ENCODE measurements at regions of chr11 and their contacts with region 1.

Region 1: DNA sequence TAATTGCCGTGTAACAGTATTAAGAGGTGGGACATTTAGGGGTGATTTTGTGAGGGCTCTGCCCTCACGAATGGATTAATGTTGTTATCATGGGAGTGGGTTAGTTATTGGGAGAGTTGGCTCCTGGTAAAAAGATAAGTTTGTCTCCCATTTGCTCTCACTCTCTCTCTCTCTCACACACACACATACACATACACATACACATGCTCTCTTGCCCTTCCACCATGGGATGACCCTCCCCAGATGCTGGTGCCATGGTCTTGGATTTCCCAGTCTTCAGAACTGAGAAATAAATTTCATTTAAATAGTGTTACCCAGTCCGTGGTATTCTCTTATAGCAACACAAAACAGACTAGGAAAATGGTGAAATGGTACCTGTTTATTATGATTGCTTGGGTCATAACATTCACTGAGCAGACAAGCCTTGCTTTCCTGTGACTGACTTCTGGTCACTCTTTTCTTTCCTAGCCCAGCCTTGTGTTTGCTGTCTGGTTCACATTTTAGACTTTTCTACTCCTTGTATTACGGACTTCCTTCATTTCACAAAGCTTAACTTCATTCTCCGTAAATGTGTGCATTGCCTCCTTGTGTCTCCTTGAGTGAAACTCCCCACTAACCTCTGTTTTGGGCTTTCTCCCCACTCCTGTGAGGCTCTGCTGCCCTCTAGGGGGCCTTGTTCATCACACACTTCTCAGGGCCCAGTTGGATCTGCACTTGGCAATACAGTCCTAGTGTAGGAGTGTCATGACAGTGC is 206.5 kb upstream of the CTSC start:
- DNase-seq: peak; percentile 85
- H3K4me3 Mint-ChIP-seq: no peak overlapping the region
- H3K27ac Mint-ChIP-seq: no peak overlapping the region
- H3K4me1 Mint-ChIP-seq: peaks cover 11% of the 10 kb centered on the region
- H3K27me3 Mint-ChIP-seq: no peaks in the 10 kb centered on the region

Region 2: GRCh38 chr11:87352759-87353707 is 1191.0 kb before region 1 on chr11:
- CTCF ChIA-PET with region 1: interaction called, 4 read pairs
- POLR2A ChIA-PET with region 1: no interaction called
- intact Hi-C with region 1: loop called (anchors 1 kb)
- DNase-seq: peak; percentile 90
- H3K4me3 Mint-ChIP-seq: no peak overlapping the region
- H3K27ac Mint-ChIP-seq: no peak overlapping the region
- H3K4me1 Mint-ChIP-seq: peaks cover 8% of the 10 kb centered on the region
- H3K27me3 Mint-ChIP-seq: peaks cover 5% of the 10 kb centered on the region

Region 3: DNA sequence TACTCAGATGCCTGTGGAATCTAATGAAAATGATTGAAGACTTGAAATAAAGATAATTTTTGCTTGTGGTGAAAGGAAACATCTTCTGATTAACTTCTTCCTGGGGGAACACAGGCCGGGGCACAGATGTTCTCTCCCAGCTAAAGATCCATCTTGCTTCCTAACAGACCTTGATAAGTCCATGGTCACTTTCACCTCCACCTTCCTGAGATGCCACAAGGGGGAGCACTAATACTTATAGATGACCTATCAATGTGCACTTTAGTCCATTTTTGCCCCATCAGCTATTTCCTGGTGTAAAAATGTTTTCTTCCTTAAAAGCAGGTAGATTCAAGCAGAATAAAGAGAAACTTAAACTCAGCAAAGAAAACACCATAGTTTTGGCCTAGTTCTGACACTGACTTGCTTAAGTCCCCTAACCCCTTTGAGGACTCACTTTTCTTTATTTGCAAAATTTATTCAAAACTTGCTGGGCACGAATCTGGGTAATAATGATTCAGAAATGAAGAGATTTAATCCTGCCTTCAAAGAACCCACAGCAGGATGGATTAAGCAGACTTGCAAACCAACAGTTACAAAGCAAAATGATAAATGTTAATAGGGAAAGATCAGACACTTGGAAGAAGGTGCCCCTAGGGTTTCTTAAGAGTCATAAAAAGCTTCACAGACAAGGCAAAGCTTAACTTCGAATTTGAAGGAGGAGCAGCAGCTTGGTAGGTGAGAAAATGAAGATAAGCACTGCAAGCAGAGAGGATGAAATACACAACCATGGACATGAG is 527.5 kb before region 1 on chr11:
- CTCF ChIA-PET with region 1: interaction called, 50 read pairs
- POLR2A ChIA-PET with region 1: no interaction called
- intact Hi-C with region 1: loop called (anchors 1 kb)
- DNase-seq: peak; percentile 64
- H3K4me3 Mint-ChIP-seq: no peak overlapping the region
- H3K27ac Mint-ChIP-seq: no peak overlapping the region
- H3K4me1 Mint-ChIP-seq: no peaks in the 10 kb centered on the region
- H3K27me3 Mint-ChIP-seq: no peaks in the 10 kb centered on the region

Region 4: DNA sequence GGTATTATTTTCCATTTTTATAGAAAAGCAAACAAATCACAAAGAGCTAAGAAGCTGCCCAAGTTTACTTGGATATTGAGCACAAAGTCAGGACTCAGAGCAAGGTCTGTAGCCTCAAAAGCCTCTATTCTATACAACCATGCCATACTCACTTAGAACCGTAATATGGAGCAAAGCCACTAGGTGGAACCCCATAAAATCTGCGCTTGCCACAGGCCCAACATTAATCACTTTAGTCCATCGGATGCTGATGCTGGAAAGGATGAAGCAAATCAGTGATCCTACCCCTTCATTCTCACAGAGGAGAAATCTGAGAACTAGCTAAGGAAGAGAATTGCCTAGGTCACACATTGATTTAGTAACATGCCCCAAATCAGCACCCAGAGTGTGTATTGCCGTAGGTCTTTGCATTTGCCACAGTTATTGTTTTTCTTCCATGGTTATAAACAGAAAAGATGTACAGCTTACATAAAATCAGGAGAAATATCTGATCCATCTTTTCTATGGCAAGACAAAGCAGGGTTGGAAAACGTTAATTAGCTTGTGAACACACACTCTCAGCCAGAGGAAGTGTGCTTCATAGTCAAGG is 312.1 kb before region 1 on chr11:
- CTCF ChIA-PET with region 1: interaction called, 12 read pairs
- POLR2A ChIA-PET with region 1: no interaction called
- intact Hi-C with region 1: loop called (anchors 1 kb)
- DNase-seq: peak; percentile 13
- H3K4me3 Mint-ChIP-seq: no peak overlapping the region
- H3K27ac Mint-ChIP-seq: no peak overlapping the region
- H3K4me1 Mint-ChIP-seq: no peaks in the 10 kb centered on the region
- H3K27me3 Mint-ChIP-seq: no peaks in the 10 kb centered on the region

Region 5: DNA sequence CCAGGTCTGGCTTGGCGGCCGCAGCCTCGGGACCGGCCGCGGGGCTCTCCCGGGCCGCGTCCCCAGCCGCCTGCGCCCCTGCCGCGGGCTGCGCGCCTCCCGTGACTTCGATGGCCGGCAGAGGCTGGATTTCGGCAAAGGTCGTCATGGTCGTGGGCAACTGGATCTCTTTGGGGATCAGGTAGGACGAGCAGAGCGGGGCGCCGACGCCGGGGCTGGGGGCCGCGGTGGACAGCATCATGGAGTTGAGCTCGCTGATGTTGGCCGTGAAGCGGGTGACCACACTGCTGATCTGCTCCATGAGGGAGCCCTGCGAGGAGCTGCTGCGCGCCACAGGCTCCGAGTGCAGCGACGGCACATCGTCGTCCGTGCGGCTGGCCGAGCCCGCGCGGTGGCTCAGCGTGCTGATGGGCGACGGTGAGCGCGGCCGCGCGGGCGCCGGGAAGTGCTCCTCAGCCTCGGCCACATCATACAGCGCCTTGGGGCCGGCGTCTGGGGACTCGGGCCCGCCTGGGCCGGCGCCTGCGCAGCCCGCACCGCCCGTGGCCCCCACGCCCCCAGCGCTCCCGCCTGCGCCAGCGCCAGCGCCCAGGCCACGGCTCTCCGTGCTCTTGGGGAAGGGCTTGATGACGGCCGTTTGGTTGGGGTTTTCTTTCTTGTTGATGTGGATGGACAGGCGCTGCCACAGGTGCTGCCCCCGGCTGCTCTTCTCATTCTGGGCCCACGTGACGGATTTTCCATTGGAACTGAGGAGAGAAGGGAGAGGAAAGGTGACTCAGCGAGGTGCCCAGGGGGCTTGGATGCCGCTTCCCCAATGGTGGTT is 35.1 kb before region 1 on chr11:
- CTCF ChIA-PET with region 1: no interaction called
- POLR2A ChIA-PET with region 1: no interaction called
- intact Hi-C with region 1: no loop called
- DNase-seq: peak; percentile 48
- H3K4me3 Mint-ChIP-seq: peak overlapping the region; percentile 54
- H3K27ac Mint-ChIP-seq: no peak overlapping the region
- H3K4me1 Mint-ChIP-seq: peaks cover 9% of the 10 kb centered on the region
- H3K27me3 Mint-ChIP-seq: peaks cover 37% of the 10 kb centered on the region

Region 6: DNA sequence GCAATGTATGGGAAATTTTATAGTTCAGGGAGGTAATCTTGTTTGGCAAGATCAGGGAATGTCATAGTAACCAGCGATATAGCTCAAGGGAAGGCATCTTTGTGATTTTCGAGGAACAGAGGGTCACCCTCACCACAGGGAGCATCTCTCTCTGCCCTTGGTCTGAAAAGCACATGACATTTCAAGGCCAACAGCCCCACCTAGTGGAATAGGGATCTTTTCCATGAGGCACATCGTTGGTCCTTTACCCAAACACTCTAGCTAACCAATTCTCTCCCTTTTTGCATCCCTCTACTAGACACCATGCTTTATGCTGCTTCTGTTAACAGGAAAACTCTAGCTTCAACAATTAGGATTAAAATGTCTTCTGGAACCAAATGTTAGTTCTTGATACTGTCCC is 342.7 kb after region 1 on chr11:
- CTCF ChIA-PET with region 1: no interaction called
- POLR2A ChIA-PET with region 1: no interaction called
- intact Hi-C with region 1: loop called (anchors 2 kb)
- DNase-seq: peak; percentile 30
- H3K4me3 Mint-ChIP-seq: no peak overlapping the region
- H3K27ac Mint-ChIP-seq: no peak overlapping the region
- H3K4me1 Mint-ChIP-seq: no peaks in the 10 kb centered on the region
- H3K27me3 Mint-ChIP-seq: no peaks in the 10 kb centered on the region